ENCODE measurements at regions of chr6 and their contacts with region 1.

Region 1: DNA sequence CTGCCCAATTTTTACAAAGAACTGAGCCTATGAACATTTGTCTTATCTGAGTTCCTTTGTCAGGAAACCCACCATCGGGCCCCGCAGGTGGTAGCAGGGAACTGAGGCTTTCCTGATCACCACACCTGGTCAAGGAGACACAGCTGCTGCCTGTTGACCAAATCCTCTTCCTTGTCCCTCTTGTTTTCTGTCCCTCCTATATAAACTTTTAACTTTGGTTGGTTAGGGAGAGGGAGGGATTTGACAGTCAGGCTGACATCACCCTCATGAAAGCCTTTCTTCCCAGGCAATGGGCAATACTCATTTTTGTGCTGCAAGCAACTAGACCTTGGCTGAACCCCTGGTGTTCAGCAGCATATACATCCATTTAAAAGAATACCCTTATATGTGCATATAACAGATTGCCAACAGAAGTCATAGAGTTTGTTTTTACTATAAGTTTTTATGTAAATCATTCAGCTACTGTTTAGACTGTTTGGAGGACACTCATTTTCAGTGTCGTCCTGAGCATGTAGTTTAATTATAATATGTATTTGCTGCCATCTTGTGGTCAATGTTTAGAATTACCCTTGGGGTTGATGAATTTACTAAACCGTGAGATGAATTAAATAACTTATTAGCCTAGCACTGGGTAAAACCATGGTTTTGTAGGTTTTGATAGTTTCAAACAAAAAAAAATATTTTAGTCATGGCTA is 17.0 kb downstream of the CRISP1 start:
- DNase-seq: no peak
- H3K4me3 ChIP-seq: no peak overlapping the region
- CTCF ChIP-seq: no peak
- POLR2A ChIP-seq: no peak

Region 2: GRCh38 chr6:49625140-49625539 is 224.2 kb before region 1 on chr6:
- intact Hi-C with region 1: loop called (anchors 5 kb)
- DNase-seq: no peak
- H3K4me3 ChIP-seq: no peak overlapping the region
- CTCF ChIP-seq: no peak
- POLR2A ChIP-seq: no peak

Region 3: DNA sequence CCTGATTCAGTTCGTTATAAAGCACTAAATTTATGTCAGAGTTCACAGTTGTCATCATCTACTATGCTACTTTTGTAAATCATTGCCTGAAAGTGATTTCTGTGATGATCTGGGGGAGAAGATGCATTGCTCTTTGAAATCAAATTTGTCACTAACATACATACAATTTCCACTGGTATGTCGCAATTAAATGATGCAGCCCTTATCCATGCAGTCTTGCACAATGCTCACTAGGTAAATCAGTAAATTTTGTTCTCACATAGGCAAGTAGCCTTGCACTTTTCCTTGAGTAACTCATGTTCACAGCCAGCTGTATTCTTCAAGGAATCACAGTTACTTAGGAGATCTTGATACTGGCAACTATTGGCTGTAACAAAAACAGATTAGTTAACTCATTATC is 156.8 kb before region 1 on chr6:
- intact Hi-C with region 1: no loop called
- DNase-seq: no peak
- H3K4me3 ChIP-seq: no peak overlapping the region
- CTCF ChIP-seq: no peak
- POLR2A ChIP-seq: no peak